WTC11 (cell line): ENCODE measurements at regions of chr3 and their contacts with region 1.

Region 1: DNA sequence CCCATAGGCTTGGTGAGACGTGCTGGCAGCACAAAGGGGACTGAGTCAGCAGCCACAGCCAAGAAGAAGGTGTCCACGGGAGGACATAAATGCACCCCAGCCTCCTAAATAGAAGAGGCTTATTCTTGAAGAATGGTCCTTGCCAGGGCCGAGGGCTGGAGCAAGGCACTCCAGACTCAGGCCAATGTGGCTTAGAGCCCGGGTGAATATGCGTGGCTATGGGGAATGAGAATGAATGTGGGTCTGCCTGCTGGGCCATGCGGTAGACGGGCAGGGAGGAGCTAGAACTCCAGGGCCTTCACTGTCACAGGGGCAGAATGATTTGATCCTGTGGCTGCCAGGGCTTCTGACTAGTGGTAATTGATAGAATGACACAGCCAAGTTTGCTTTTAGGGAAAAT is 34.0 kb downstream of the DHX30 start:
- DNase-seq: no peak
- ATAC-seq: peak; percentile 20
- H3K4me3 Mint-ChIP-seq: no peak overlapping the region
- H3K27ac Mint-ChIP-seq: peak overlapping the region; percentile 67
- H3K4me1 Mint-ChIP-seq: peaks cover 27% of the 10 kb centered on the region
- H3K27me3 Mint-ChIP-seq: no peaks in the 10 kb centered on the region
- CTCF ChIP-seq: no peak

Region 2: GRCh38 chr3:47824541-47825473 is 12.2 kb before region 1 on chr3:
- CTCF ChIA-PET with region 1: interaction called, 66 read pairs
- POLR2A ChIA-PET with region 1: interaction called, 15 read pairs
- DNase-seq: peak; percentile 82
- ATAC-seq: peak; percentile 99
- H3K4me3 Mint-ChIP-seq: peak overlapping the region; percentile 94
- H3K27ac Mint-ChIP-seq: peak overlapping the region; percentile 91
- H3K4me1 Mint-ChIP-seq: peaks cover 11% of the 10 kb centered on the region
- H3K27me3 Mint-ChIP-seq: no peaks in the 10 kb centered on the region
- CTCF ChIP-seq: peak; percentile 41; the same call in 1 of the 2 replicates

Region 3: GRCh38 chr3:47849699-47850563 is 12.9 kb after region 1 on chr3:
- CTCF ChIA-PET with region 1: interaction called, 22 read pairs
- POLR2A ChIA-PET with region 1: no interaction called
- DNase-seq: no peak
- ATAC-seq: peak; percentile 25
- H3K4me3 Mint-ChIP-seq: no peak overlapping the region
- H3K27ac Mint-ChIP-seq: peak overlapping the region; percentile 64
- H3K4me1 Mint-ChIP-seq: no peaks in the 10 kb centered on the region
- H3K27me3 Mint-ChIP-seq: no peaks in the 10 kb centered on the region
- CTCF ChIP-seq: peak; percentile 29; the same call in 1 of the 2 replicates

Region 4: GRCh38 chr3:47890828-47891612 is 54.0 kb after region 1 on chr3:
- CTCF ChIA-PET with region 1: interaction called, 15 read pairs
- POLR2A ChIA-PET with region 1: no interaction called
- DNase-seq: no peak
- ATAC-seq: peak; percentile 20; the same call in 1 of the 2 replicates
- H3K4me3 Mint-ChIP-seq: no peak overlapping the region
- H3K27ac Mint-ChIP-seq: peak overlapping the region; percentile 76
- H3K4me1 Mint-ChIP-seq: peaks cover 50% of the 10 kb centered on the region
- H3K27me3 Mint-ChIP-seq: no peaks in the 10 kb centered on the region
- CTCF ChIP-seq: no peak

Region 5: DNA sequence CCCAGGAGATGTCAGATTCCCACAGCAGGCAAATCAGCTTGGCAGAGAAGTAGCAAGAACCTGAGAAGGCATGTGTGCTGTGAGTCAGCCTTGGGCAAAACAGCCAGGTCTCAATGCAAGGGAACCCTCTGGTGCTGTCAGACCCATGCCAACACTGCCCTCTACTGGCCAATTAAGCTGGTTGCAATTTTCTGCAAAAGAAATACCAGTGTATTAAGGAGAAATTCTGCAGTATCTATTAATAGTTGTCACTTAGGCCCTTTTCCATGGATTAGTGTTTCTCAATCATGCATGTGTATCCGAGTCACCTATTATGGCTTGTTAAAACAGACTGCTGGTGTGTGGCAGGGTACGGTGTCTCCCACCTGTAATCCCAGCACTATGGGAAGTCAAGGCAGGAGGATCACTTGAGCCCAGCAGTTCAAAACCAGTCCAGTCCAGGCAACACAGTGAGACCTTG is 153.0 kb after region 1 on chr3:
- CTCF ChIA-PET with region 1: interaction called, 32 read pairs
- POLR2A ChIA-PET with region 1: interaction called, 3 read pairs
- DNase-seq: peak; percentile 67
- ATAC-seq: peak; percentile 97
- H3K4me3 Mint-ChIP-seq: no peak overlapping the region
- H3K27ac Mint-ChIP-seq: peak overlapping the region; percentile 38; the same call in 1 of the 2 replicates
- H3K4me1 Mint-ChIP-seq: peaks cover 14% of the 10 kb centered on the region
- H3K27me3 Mint-ChIP-seq: no peaks in the 10 kb centered on the region
- CTCF ChIP-seq: peak; percentile 94

Region 6: GRCh38 chr3:48088749-48089466 is 251.9 kb after region 1 on chr3:
- CTCF ChIA-PET with region 1: interaction called, 12 read pairs
- POLR2A ChIA-PET with region 1: no interaction called
- DNase-seq: peak; percentile 97
- ATAC-seq: peak; percentile 96
- H3K4me3 Mint-ChIP-seq: peak overlapping the region; percentile 94
- H3K27ac Mint-ChIP-seq: peak overlapping the region; percentile 99
- H3K4me1 Mint-ChIP-seq: peaks cover 27% of the 10 kb centered on the region
- H3K27me3 Mint-ChIP-seq: no peaks in the 10 kb centered on the region
- CTCF ChIP-seq: no peak

Region 7: GRCh38 chr3:48157950-48158376 is 321.0 kb after region 1 on chr3:
- CTCF ChIA-PET with region 1: interaction called, 145 read pairs
- POLR2A ChIA-PET with region 1: no interaction called
- DNase-seq: peak; percentile 82
- ATAC-seq: peak; percentile 69
- H3K4me3 Mint-ChIP-seq: no peak overlapping the region
- H3K27ac Mint-ChIP-seq: peak overlapping the region; percentile 34; the same call in 1 of the 2 replicates
- H3K4me1 Mint-ChIP-seq: peaks cover 8% of the 10 kb centered on the region
- H3K27me3 Mint-ChIP-seq: no peaks in the 10 kb centered on the region
- CTCF ChIP-seq: peak; percentile 78